Sigmoid colon (tissue), 7 donors: ENCODE measurements at regions of chr19 and their contacts with region 1.

Region 1: GRCh38 chr19:51703575-51704515 is 10.7 kb downstream of the SPACA6 start:
- DNase-seq: peak; percentile 99
- H3K4me3 ChIP-seq: peak overlapping the region; percentile 55 to 63 (median 60)
- H3K27ac ChIP-seq: peak overlapping the region; percentile 87 to 95 (median 92)
- H3K4me1 ChIP-seq: peaks cover 0 to 40% (median 40%) of the 10 kb centered on the region in 4 donors
- H3K27me3 ChIP-seq: no peaks in the 10 kb centered on the region
- CTCF ChIP-seq: peak in 3 of 4 experiments; percentile 21 to 36 (median 34)
- EP300 ChIP-seq: peak in 2 of 4 donors; percentile 33 to 35
- POLR2A ChIP-seq: peak; percentile 65 to 72

Region 2: DNA sequence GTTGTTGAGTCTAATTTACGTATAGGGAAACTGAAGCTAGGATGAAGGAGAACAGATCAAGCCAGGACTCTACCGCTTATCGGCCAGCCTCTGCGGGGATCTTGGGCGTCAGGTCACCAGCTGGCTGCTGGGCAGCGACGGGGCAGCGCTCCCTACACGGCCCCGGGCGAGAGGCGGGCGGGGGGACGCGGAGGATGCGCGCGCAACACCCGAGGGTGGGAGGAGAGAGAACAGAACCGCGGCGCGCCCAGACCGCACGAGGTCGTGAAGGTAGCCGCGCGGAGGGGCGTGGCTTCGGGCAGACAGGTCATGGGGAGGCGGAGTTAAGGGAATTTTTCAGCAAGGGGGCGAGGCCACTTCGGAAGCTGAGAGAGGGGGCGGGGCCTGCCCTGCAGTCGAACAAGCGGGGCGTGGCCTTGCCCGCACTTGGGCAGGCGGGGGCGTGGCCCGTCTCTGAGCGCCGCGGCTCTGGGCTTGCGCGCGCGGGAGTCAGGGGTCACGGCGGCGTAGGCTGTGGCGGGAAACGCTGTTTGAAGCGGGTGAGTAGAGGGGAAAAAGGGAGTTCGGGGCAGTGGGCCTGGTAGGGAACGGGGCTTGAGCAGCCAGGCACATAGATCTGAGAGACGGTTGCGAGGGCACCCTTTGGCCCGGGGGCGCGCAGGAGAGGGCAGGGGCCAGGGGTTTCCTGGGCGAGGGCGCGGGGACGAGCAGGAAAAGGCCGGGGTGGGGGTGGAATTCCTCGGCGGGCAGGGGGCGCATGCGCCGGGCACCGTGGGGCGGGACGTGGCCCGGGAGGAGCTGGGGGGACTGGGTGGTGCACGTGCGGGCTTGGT is 1319.8 kb before region 1 on chr19 and contains the start of gene POLD1:
- intact Hi-C with region 1: loop called (anchors 10 kb)
- DNase-seq: peak; percentile 98
- H3K4me3 ChIP-seq: peak within 1 kb of the TSS; percentile 58 to 77 (median 73)
- H3K27ac ChIP-seq: peak within 1 kb of the TSS; percentile 84 to 92 (median 88)
- H3K4me1 ChIP-seq: peaks cover 0 to 21% (median 16%) of the 10 kb centered on the region in 4 donors
- H3K27me3 ChIP-seq: no peaks in the 10 kb centered on the region
- CTCF ChIP-seq: no peak
- EP300 ChIP-seq: no peak
- POLR2A ChIP-seq: no peak
- total RNA-seq, gene POLD1: 9.6 to 20.5 (median 10.0) TPM

Region 3: GRCh38 chr19:51660975-51661600 is 42.8 kb before region 1 on chr19:
- intact Hi-C with region 1: no loop called
- DNase-seq: no peak
- H3K4me3 ChIP-seq: no peak overlapping the region
- H3K27ac ChIP-seq: no peak overlapping the region
- H3K4me1 ChIP-seq: peaks cover 0 to 4% (median 0%) of the 10 kb centered on the region in 4 donors
- H3K27me3 ChIP-seq: peaks cover 0 to 36% (median 12%) of the 10 kb centered on the region in 3 donors
- CTCF ChIP-seq: peak in 3 of 4 experiments; percentile 24 to 49 (median 45)
- EP300 ChIP-seq: no peak
- POLR2A ChIP-seq: no peak

Region 4: GRCh38 chr19:51688672-51689571 is 14.9 kb before region 1 on chr19:
- intact Hi-C with region 1: loop called (anchors 1 kb)
- DNase-seq: peak; percentile 97
- H3K4me3 ChIP-seq: peak overlapping the region; percentile 89 to 97 (median 96)
- H3K27ac ChIP-seq: peak overlapping the region; percentile 98 to 100 (median 100)
- H3K4me1 ChIP-seq: peaks cover 0 to 44% (median 40%) of the 10 kb centered on the region in 4 donors
- H3K27me3 ChIP-seq: no peaks in the 10 kb centered on the region
- CTCF ChIP-seq: no peak
- EP300 ChIP-seq: peak in 1 of 4 donors; percentile 36
- POLR2A ChIP-seq: peak; percentile 53 to 56